Transverse colon (tissue), 4 donors: ENCODE measurements at regions of chr2 and their contacts with region 1.

Region 1: DNA sequence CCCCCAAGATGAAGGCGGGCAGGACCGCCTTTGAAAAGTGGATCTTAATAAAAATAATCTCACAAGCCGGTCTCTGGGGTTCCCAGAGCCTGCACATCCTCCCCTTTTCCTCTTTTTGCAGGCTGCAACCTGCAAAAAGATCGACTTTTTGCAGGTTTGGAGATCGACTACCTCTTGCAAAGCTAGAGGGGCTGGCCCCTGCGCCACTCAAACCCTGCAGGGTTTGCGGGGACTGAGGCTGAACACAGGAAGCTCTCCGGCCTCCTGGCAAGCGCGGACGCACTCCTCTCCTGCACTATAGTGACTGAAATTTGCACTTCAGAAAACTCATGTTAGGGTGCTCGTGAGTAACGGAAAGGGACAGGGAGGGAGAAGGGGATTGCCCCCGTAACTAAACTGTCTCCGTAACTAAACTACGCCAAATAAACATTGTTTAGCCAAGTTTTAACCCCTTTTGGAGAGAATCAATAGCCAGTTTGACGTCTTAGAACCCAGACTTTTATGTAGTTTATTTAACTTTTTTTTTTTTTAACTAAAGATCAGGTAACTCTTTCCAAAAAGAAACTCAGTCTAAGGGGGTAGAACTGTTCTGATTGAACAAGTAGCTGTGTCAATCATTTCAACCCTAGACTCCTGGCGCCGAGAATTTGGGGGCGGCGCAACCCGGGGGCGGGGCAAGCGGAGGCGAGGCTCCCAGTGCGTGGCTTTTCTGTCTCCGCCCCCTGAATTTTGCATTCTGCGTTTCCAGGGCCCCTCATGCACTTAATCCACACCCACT is 2.5 kb downstream of the IGFBP5 start:
- DNase-seq: peak; percentile 77
- H3K4me3 ChIP-seq: peak overlapping the region; percentile 18 to 64 (median 42)
- H3K27ac ChIP-seq: peak overlapping the region; percentile 82 to 94 (median 84)
- H3K4me1 ChIP-seq: peaks cover 0 to 65% (median 14%) of the 10 kb centered on the region in 4 donors
- H3K27me3 ChIP-seq: peaks cover 86% of the 10 kb centered on the region
- CTCF ChIP-seq: no peak
- EP300 ChIP-seq: no peak
- POLR2A ChIP-seq: no peak

Region 2: GRCh38 chr2:216316743-216317142 is 376.1 kb before region 1 on chr2:
- in situ Hi-C with region 1: no loop called
- intact Hi-C with region 1: no loop called
- DNase-seq: no peak
- H3K4me3 ChIP-seq: no peak overlapping the region
- H3K27ac ChIP-seq: no peak overlapping the region
- H3K4me1 ChIP-seq: no peaks in the 10 kb centered on the region
- H3K27me3 ChIP-seq: peaks cover 18% of the 10 kb centered on the region
- CTCF ChIP-seq: no peak
- EP300 ChIP-seq: no peak
- POLR2A ChIP-seq: no peak

Region 3: GRCh38 chr2:217248312-217248935 is 555.6 kb after region 1 on chr2:
- in situ Hi-C with region 1: loop called in 1 of 4 experiments (anchors 10 kb)
- intact Hi-C with region 1: loop called (anchors 5 kb)
- DNase-seq: peak; percentile 50
- H3K4me3 ChIP-seq: no peak overlapping the region
- H3K27ac ChIP-seq: peak overlapping the region; percentile 72 to 87 (median 83)
- H3K4me1 ChIP-seq: peaks cover 3 to 21% (median 11%) of the 10 kb centered on the region in 4 donors
- H3K27me3 ChIP-seq: no peaks in the 10 kb centered on the region
- CTCF ChIP-seq: no peak
- EP300 ChIP-seq: no peak
- POLR2A ChIP-seq: no peak

Region 4: GRCh38 chr2:217622205-217623060 is 929.6 kb after region 1 on chr2:
- in situ Hi-C with region 1: no loop called
- intact Hi-C with region 1: loop called (anchors 5 kb)
- DNase-seq: peak; percentile 22
- H3K4me3 ChIP-seq: no peak overlapping the region
- H3K27ac ChIP-seq: peak overlapping the region; percentile 73 to 82 (median 78)
- H3K4me1 ChIP-seq: peaks cover 18 to 27% (median 24%) of the 10 kb centered on the region in 4 donors
- H3K27me3 ChIP-seq: no peaks in the 10 kb centered on the region
- CTCF ChIP-seq: no peak
- EP300 ChIP-seq: peak; percentile 84
- POLR2A ChIP-seq: no peak

Region 5: GRCh38 chr2:217822296-217823252 is 1129.7 kb after region 1 on chr2:
- in situ Hi-C with region 1: no loop called
- intact Hi-C with region 1: no loop called
- DNase-seq: no peak
- H3K4me3 ChIP-seq: no peak overlapping the region
- H3K27ac ChIP-seq: peak overlapping the region in 2 of 4 donors; percentile 21 to 73
- H3K4me1 ChIP-seq: peaks cover 8 to 29% (median 17%) of the 10 kb centered on the region in 4 donors
- H3K27me3 ChIP-seq: no peaks in the 10 kb centered on the region
- CTCF ChIP-seq: no peak
- EP300 ChIP-seq: no peak
- POLR2A ChIP-seq: no peak